Activated CD4-positive, alpha-beta memory T cell treated with anti-CD3 and anti-CD28 coated beads for 36 hours (primary cell): ENCODE measurements at regions of chr9 and their contacts with region 1.

Region 1: DNA sequence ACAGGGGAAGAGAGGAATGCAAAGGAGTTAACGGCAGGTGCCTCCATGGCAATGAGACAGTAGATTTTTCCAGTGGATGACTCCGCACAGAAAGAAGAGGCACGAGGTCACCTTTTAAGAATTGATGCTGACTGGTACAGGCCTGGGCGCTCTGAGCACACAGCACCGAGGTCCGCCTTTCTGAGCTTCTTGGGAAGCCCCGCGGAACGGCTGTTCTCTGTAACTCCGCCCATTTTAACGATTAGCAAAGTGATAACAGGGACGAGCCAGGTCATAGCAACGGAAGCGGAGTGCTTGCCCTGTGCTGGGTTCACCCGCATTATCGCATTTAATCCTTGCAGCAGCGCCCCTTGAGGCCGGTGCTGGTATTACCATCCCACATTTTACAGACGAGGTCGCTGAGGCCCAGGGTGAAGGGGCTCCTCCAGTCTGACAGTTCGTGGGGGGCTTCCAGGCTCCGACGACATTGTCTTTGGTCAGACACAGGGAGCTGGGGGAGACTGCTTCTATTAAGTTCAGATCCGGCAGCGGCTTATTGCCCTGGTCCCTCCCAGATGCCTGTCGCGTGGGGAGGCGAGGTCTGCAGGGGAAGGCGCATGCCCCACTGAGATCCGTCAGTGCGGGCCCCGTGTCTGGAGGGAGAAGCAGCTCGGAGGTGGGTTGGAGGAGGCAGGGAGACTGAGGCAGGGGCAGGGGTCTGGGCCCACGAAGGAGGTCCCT is 22.4 kb upstream of the HMCN2 start:
- DNase-seq: peak; percentile 88
- H3K4me3 Mint-ChIP-seq: peak overlapping the region; percentile 53
- H3K27ac Mint-ChIP-seq: peak overlapping the region; percentile 7
- H3K4me1 Mint-ChIP-seq: peaks cover 32% of the 10 kb centered on the region
- H3K27me3 Mint-ChIP-seq: no peaks in the 10 kb centered on the region

Region 2: DNA sequence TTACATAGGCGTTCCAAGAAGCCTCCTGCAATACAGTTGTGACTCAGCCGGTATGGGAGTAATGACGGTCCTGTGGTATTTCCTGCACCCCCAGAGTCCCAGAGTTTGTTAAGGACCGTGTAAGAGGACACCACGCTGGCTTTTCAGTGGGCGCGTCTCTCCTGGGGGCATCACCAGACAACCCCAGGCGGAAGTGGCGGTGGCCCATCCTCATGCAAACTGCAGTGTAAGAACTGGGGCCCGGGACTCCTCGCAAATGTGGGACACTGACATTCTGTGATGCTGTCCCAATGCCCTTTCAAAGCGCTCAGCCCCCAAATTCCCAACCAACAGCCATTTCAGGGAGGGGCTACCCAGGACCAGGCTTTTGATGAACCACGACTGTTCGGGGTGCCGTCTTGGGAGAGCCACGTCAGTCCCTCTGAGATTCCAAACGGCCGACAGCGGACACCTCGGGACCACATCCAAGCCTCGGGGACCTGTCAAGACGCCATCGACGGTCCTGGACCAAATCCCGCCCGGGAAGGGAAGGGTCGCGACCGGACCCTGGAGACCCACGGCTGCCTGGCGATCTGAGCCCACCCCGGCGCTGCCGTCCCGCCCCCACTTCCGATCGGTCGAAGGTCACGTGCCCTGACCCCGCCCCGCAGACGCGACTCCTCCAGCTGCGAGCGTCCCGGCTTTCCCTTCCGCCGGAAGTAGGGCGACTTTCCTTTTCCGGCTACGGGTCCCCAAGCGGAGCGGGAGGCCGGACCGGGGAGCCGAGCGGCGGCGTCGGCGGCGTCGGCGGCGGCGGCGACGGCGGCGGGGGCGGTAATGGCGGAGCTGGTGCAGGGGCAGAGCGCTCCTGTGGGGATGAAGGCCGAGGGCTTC is 335.9 kb after region 1 on chr9 and contains the start of gene FUBP3:
- CTCF ChIA-PET with region 1: no interaction called
- POLR2A ChIA-PET with region 1: no interaction called
- intact Hi-C with region 1: loop called (anchors 5 kb)
- DNase-seq: peak; percentile 95
- H3K4me3 Mint-ChIP-seq: peak within 1 kb of the TSS; percentile 85
- H3K27ac Mint-ChIP-seq: peak within 1 kb of the TSS; percentile 90
- H3K4me1 Mint-ChIP-seq: peaks cover 40% of the 10 kb centered on the region
- H3K27me3 Mint-ChIP-seq: no peaks in the 10 kb centered on the region
- total RNA-seq, gene FUBP3: 31.8 to 37.5 TPM